ENCODE measurements at regions of chr20 and their contacts with region 1.

Region 1: GRCh38 chr20:3218307-3218988 is 9.2 kb downstream of the ITPA start:
- DNase-seq: peak; percentile 73
- H3K4me3 ChIP-seq: no peak overlapping the region
- H3K27ac ChIP-seq: no peak overlapping the region
- H3K4me1 ChIP-seq: no peaks in the 10 kb centered on the region
- H3K27me3 ChIP-seq: no peaks in the 10 kb centered on the region
- CTCF ChIP-seq: peak; percentile 95

Region 2: GRCh38 chr20:2470423-2471193 is 747.8 kb before region 1 on chr20 and contains the start of gene SNRPB:
- CTCF ChIA-PET with region 1: interaction called, 13 read pairs
- POLR2A ChIA-PET with region 1: no interaction called
- intact Hi-C with region 1: no loop called
- DNase-seq: peak; percentile 99
- H3K4me3 ChIP-seq: peak within 1 kb of the TSS; percentile 72
- H3K27ac ChIP-seq: peak within 1 kb of the TSS; percentile 95
- H3K4me1 ChIP-seq: peaks cover 10% of the 10 kb centered on the region
- H3K27me3 ChIP-seq: no peaks in the 10 kb centered on the region
- CTCF ChIP-seq: no peak
- total RNA-seq, gene SNRPB: 493 and 522 TPM in 2 replicates

Region 3: GRCh38 chr20:3156811-3157619 is 61.4 kb before region 1 on chr20:
- CTCF ChIA-PET with region 1: interaction called, 13 read pairs
- POLR2A ChIA-PET with region 1: no interaction called
- intact Hi-C with region 1: no loop called
- DNase-seq: no peak
- H3K4me3 ChIP-seq: no peak overlapping the region
- H3K27ac ChIP-seq: no peak overlapping the region
- H3K4me1 ChIP-seq: no peaks in the 10 kb centered on the region
- H3K27me3 ChIP-seq: no peaks in the 10 kb centered on the region
- CTCF ChIP-seq: no peak

Region 4: DNA sequence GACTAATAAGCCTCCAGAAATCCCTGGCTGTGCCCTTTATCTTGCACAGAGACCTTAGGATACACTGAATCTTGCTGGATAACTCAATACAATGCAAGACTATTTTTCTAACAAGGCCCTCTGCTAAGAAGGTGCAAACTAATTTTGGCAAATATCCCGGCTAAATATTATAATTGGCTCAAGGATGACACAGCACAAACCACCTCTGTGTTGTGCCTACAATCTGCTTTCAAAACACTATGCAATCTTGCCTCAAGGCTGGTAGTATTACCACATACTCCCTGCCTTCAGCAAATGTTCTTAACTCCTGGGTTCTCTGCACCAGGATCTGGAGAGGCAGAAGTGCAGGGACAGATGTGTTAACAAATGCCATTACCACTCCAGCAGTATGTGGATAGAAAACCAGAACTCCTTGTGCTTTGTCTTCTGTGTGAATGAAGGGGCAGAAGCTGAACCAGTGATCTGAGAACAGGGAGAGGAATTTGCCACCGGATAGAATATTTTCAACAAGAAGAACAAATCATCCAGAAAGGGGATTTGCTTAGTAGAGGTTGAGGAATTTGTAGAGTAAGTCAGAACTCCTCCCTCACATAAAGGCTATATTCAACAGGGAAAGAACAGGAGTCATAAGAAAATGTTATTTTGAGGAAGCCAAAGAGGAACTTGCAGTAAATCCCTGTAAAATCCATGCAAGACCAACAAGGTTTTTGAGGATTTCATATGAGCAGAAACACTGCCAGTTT is 94.7 kb after region 1 on chr20:
- CTCF ChIA-PET with region 1: no interaction called
- POLR2A ChIA-PET with region 1: no interaction called
- intact Hi-C with region 1: loop called (anchors 2 kb)
- DNase-seq: peak; percentile 60
- H3K4me3 ChIP-seq: no peak overlapping the region
- H3K27ac ChIP-seq: peak overlapping the region; percentile 56
- H3K4me1 ChIP-seq: peaks cover 15% of the 10 kb centered on the region
- H3K27me3 ChIP-seq: no peaks in the 10 kb centered on the region
- CTCF ChIP-seq: no peak

Region 5: GRCh38 chr20:3710703-3711483 is 492.4 kb after region 1 on chr20:
- CTCF ChIA-PET with region 1: no interaction called
- POLR2A ChIA-PET with region 1: no interaction called
- intact Hi-C with region 1: loop called (anchors 5 kb)
- DNase-seq: peak; percentile 80
- H3K4me3 ChIP-seq: no peak overlapping the region
- H3K27ac ChIP-seq: no peak overlapping the region
- H3K4me1 ChIP-seq: no peaks in the 10 kb centered on the region
- H3K27me3 ChIP-seq: no peaks in the 10 kb centered on the region
- CTCF ChIP-seq: peak; percentile 98

Measured in A673 (cell line).